Mammary epithelial cell (primary cell): ENCODE measurements at regions of chr6 and their contacts with region 1.

Region 1: DNA sequence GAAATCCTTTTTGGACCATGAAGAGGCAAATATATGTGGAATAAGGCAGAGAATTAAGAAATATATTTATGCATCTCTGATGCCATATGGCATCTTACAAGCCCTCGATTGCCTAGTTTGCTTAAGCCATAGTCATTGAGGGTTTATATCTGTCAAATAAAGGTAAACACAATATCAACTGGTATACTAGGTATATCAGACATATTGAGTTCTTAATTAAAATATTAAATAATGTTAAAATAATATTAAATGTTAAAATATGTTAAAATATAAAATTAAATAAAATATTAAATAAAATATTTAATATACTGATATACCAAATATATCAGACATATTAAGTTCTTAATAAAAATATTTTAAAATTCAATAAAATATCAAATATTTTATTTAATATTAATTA is 567.4 kb upstream of the PTCHD4 start:
- DNase-seq: no peak
- H3K4me3 ChIP-seq: no peak overlapping the region
- H3K27ac ChIP-seq: no peak overlapping the region
- H3K4me1 ChIP-seq: no peaks in the 10 kb centered on the region
- H3K27me3 ChIP-seq: no peaks in the 10 kb centered on the region
- CTCF ChIP-seq: no peak

Region 2: DNA sequence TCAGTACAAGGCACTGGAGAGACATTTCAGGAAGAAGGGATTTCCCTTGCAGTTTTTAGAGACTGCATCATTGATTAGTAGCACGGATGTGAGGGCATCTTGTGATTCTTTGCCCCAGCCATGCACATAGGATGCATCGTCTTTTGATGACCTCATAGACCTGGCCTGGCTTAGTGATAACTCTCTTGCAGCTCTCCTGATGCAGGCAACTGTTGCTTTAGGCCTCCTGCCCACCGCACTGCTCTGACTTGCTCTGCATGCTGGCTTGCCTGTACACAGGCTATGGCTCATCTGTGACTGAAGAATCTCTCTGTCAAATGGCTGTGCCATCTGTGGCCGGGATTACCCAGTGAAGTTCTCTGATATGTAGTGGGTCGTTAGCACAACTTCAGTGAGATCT is 359.7 kb before region 1 on chr6:
- CTCF ChIA-PET with region 1: no interaction called
- dilution Hi-C with region 1: no loop called
- in situ Hi-C with region 1: no loop called
- intact Hi-C with region 1: no loop called
- DNase-seq: peak; percentile 31
- H3K4me3 ChIP-seq: no peak overlapping the region
- H3K27ac ChIP-seq: no peak overlapping the region
- H3K4me1 ChIP-seq: no peaks in the 10 kb centered on the region
- H3K27me3 ChIP-seq: no peaks in the 10 kb centered on the region
- CTCF ChIP-seq: no peak

Region 3: DNA sequence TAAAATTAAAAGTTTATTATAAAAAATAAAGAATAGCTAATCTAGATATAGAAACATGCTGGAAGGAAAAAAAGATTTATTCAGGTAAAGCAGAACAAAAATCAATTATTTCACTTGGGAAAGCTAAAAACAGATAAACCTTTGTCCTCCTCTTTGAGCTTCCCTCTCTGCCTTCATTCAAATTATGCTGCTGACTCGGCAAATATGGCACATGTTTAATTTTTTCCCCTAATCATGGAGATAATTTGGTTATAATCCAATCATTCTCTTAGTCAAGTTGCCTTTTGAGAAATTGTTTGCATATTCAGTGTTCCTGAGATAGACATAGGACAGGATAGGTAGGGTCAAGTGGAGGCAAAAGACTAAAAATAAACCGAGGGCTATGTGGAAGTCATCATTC is 10.6 kb before region 1 on chr6:
- CTCF ChIA-PET with region 1: no interaction called
- dilution Hi-C with region 1: no loop called
- in situ Hi-C with region 1: no loop called
- intact Hi-C with region 1: loop called (anchors 2 kb)
- DNase-seq: no peak
- H3K4me3 ChIP-seq: no peak overlapping the region
- H3K27ac ChIP-seq: no peak overlapping the region
- H3K4me1 ChIP-seq: peaks cover 6% of the 10 kb centered on the region
- H3K27me3 ChIP-seq: no peaks in the 10 kb centered on the region
- CTCF ChIP-seq: no peak